ENCODE measurements at regions of chr11 and their contacts with region 1.

Region 1: DNA sequence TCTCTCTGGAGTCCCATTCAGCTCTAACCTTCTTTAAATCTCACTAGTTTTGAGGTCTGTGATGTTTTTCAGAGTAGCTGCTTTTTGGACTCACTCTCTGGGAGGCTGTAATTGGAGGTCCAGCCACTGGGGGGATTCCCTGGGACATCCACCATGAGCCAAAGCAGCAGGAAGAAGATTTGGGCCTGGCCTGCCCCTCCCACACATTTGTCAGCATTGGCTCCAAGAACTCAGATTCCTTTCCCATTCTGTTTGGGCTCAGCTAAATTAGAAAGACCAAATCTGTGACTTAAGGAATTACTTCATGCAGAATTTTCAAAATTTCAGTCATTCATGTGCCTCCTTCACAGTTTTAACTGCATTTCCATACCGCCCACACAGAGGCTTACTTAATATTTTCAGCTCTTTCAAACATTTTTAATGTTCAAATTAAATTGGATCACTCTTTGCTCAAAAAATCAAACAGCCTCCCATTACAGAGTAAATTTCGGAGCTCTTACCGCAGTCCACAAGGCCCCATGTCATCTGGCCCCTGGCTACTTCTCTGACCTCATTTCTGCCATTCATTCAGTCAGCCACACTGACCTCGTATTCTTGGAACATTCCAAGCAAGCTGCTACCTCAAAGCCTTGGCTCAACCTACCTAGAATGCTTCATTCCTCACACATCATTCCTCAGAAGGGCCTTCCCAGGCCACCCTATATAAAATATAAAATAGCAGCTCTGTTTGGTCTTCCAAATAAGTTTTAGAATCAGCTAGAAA is 54.5 kb upstream of the RRAS2 start:
- DNase-seq: peak; percentile 64
- ATAC-seq: peak; percentile 84
- H3K4me3 Mint-ChIP-seq: no peak overlapping the region
- H3K27ac Mint-ChIP-seq: peak overlapping the region; percentile 37; the same call in 1 of the 2 replicates
- H3K4me1 Mint-ChIP-seq: peaks cover 67% of the 10 kb centered on the region
- H3K27me3 Mint-ChIP-seq: no peaks in the 10 kb centered on the region; the same call in 1 of the 2 replicates
- CTCF ChIP-seq: peak; percentile 52

Region 2: GRCh38 chr11:14396273-14396672 is 17.2 kb before region 1 on chr11:
- CTCF ChIA-PET with region 1: interaction called, 11 read pairs
- POLR2A ChIA-PET with region 1: no interaction called
- DNase-seq: no peak
- ATAC-seq: no peak
- H3K4me3 Mint-ChIP-seq: no peak overlapping the region
- H3K27ac Mint-ChIP-seq: no peak overlapping the region
- H3K4me1 Mint-ChIP-seq: 0 out of 2 replicates have a peak, but pooled peaks cover 2% of the 10 kb centered on the region
- H3K27me3 Mint-ChIP-seq: no peaks in the 10 kb centered on the region
- CTCF ChIP-seq: no peak